Naive thymus-derived CD4-positive, alpha-beta T cell (primary cell): ENCODE measurements at regions of chr2 and their contacts with region 1.

Region 1: DNA sequence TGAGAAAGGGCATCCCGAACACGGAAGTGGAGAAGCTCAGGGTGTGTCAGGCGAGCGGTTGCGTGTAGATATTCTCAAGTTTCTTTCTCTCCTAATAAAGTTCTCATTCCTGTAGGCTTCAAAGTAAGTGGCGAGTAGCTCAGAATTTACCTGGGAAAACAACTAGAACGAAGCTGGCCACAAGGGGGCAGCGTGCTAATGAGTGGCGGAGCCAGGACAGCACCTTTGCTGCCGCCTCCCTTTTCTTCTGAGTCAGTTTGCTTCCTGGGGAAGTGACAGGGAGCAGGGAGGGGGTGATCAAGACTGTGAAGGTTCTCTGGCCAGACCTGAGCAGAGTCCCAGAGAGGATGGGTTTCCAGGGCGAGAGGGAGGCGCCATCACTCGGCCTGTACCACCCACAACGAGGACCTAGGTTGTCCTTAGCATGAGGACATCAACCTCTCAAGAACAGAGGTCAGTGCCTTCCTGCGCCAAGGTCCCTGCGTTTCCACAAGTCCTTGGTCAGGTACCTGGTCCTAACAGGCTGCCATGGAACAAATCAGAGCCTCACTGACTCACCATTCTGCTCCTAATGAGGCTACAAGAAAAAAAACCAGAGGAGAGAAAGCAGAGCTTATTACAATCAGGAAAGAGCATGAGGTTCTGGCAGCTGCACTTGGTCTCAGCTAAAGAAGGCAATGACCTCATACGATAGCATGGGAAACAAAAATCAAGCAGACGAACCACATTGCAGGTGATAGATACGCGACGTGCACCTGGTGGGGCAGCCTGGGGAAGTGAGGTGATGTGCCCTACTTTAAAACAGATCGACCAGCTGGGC is 98.6 kb downstream of the PLB1 start:
- DNase-seq: peak; percentile 72 to 86 (median 79)
- ATAC-seq: peak; percentile 93
- H3K4me3 ChIP-seq: peak overlapping the region; percentile 33
- H3K4me3 Mint-ChIP-seq: peak overlapping the region; percentile 60 to 83 (median 69)
- H3K27ac ChIP-seq: peak overlapping the region; percentile 71
- H3K27ac Mint-ChIP-seq: peak overlapping the region; percentile 76 to 98 (median 94)
- H3K4me1 ChIP-seq: peaks cover 9 to 15% of the 10 kb centered on the region in 2 donors
- H3K4me1 Mint-ChIP-seq: peaks cover 12 to 25% (median 19%) of the 10 kb centered on the region in 7 donors
- H3K27me3 ChIP-seq: no peaks in the 10 kb centered on the region
- H3K27me3 Mint-ChIP-seq: no peaks in the 10 kb centered on the region

Region 2: GRCh38 chr2:28580078-28580477 is 14.4 kb before region 1 on chr2:
- CTCF ChIA-PET with region 1: interaction called, 11 read pairs
- POLR2A ChIA-PET with region 1: no interaction called
- intact Hi-C with region 1: no loop called
- DNase-seq: no peak
- ATAC-seq: no peak
- H3K4me3 ChIP-seq: no peak overlapping the region
- H3K4me3 Mint-ChIP-seq: no peak overlapping the region
- H3K27ac ChIP-seq: no peak overlapping the region
- H3K27ac Mint-ChIP-seq: no peak overlapping the region
- H3K4me1 ChIP-seq: no peaks in the 10 kb centered on the region
- H3K4me1 Mint-ChIP-seq: peaks cover 0 to 24% (median 2%) of the 10 kb centered on the region in 7 donors
- H3K27me3 ChIP-seq: no peaks in the 10 kb centered on the region
- H3K27me3 Mint-ChIP-seq: no peaks in the 10 kb centered on the region

Region 3: GRCh38 chr2:28615706-28616105 is 21.2 kb after region 1 on chr2:
- CTCF ChIA-PET with region 1: interaction called, 54 read pairs
- POLR2A ChIA-PET with region 1: interaction called, 29 read pairs
- intact Hi-C with region 1: loop called (anchors 1 kb)
- DNase-seq: peak in 7 of 9 donors; percentile 65 to 83 (median 73)
- ATAC-seq: peak; percentile 81
- H3K4me3 ChIP-seq: no peak overlapping the region
- H3K4me3 Mint-ChIP-seq: no peak overlapping the region
- H3K27ac ChIP-seq: peak overlapping the region; percentile 81
- H3K27ac Mint-ChIP-seq: no peak overlapping the region
- H3K4me1 ChIP-seq: peaks cover 17 to 83% of the 10 kb centered on the region in 2 donors
- H3K4me1 Mint-ChIP-seq: peaks cover 16 to 58% (median 24%) of the 10 kb centered on the region in 7 donors
- H3K27me3 ChIP-seq: no peaks in the 10 kb centered on the region
- H3K27me3 Mint-ChIP-seq: no peaks in the 10 kb centered on the region

Region 4: GRCh38 chr2:28631514-28632206 is 37.2 kb after region 1 on chr2:
- CTCF ChIA-PET with region 1: interaction called, 11 read pairs
- POLR2A ChIA-PET with region 1: interaction called, 3 read pairs
- intact Hi-C with region 1: no loop called
- DNase-seq: no peak
- ATAC-seq: no peak
- H3K4me3 ChIP-seq: no peak overlapping the region
- H3K4me3 Mint-ChIP-seq: no peak overlapping the region
- H3K27ac ChIP-seq: no peak overlapping the region
- H3K27ac Mint-ChIP-seq: peak overlapping the region in 5 of 9 donors; percentile 25 to 72 (median 43)
- H3K4me1 ChIP-seq: peaks cover 0 to 7% of the 10 kb centered on the region in 2 donors
- H3K4me1 Mint-ChIP-seq: peaks cover 0 to 17% (median 15%) of the 10 kb centered on the region in 7 donors
- H3K27me3 ChIP-seq: no peaks in the 10 kb centered on the region
- H3K27me3 Mint-ChIP-seq: no peaks in the 10 kb centered on the region

Region 5: GRCh38 chr2:28780496-28780895 is 186.0 kb after region 1 on chr2:
- CTCF ChIA-PET with region 1: interaction called, 6 read pairs
- POLR2A ChIA-PET with region 1: no interaction called
- intact Hi-C with region 1: loop called in 1 of 2 experiments (anchors 1 kb)
- DNase-seq: no peak
- ATAC-seq: no peak
- H3K4me3 ChIP-seq: no peak overlapping the region
- H3K4me3 Mint-ChIP-seq: peak overlapping the region in 1 of 10 donors; percentile 22
- H3K27ac ChIP-seq: peak overlapping the region; percentile 12
- H3K27ac Mint-ChIP-seq: peak overlapping the region in 6 of 9 donors; percentile 2 to 72 (median 24)
- H3K4me1 ChIP-seq: no peaks in the 10 kb centered on the region
- H3K4me1 Mint-ChIP-seq: peaks cover 15 to 38% (median 34%) of the 10 kb centered on the region in 7 donors
- H3K27me3 ChIP-seq: no peaks in the 10 kb centered on the region
- H3K27me3 Mint-ChIP-seq: no peaks in the 10 kb centered on the region

Region 6: DNA sequence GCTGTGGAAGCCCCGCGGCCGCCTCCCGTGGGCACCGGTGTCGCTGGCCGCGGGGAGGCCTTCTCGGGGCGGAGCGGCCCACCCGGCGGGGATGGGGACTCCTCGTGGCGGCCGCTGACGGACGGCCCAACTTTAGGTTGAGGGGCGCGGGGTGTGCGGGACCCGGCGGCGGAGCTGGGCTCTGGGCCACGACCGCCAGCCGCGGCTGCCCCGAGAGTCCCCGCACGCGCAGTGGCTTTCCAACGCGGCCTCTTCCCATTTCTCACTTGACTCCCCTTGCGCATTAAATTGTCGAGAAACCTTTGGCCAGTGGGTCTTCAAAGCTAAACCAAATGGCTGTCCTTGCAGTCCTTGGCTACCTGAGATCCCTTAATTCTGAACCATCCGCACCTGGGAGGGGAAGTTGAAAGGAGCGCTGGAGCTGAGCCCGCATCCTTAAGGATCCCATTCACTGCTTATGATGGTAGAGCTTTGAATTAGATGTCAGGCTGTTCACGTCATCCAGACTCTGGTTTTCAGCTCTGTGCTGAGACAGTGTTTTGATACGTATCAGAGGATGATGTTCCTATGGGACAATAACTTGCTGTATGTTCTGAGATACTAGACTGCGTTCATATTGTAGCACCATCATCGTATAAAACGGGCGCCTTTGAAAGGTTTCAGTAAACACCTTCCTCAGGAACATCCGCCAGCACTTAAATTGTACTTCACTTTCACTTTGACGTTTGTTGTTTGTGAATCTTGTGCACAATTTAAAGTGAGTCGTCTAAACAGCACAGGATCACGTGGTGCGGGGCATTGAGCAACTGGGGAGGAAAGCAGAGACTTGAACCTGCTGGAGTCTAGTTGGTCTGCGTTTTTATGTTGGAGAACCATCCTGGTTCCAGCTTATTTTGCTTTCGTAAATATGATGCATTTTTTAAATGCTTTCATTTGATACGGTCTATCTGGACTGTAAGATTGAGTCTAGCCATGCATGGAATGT is 521.6 kb after region 1 on chr2:
- CTCF ChIA-PET with region 1: no interaction called
- POLR2A ChIA-PET with region 1: no interaction called
- intact Hi-C with region 1: loop called in 1 of 2 experiments (anchors 10 kb)
- DNase-seq: peak; percentile 39 to 82 (median 75)
- ATAC-seq: peak; percentile 62
- H3K4me3 ChIP-seq: peak overlapping the region; percentile 75
- H3K4me3 Mint-ChIP-seq: peak overlapping the region; percentile 86 to 98 (median 88)
- H3K27ac ChIP-seq: peak overlapping the region; percentile 73
- H3K27ac Mint-ChIP-seq: peak overlapping the region; percentile 87 to 99 (median 97)
- H3K4me1 ChIP-seq: peaks cover 8 to 20% of the 10 kb centered on the region in 2 donors
- H3K4me1 Mint-ChIP-seq: peaks cover 23 to 61% (median 55%) of the 10 kb centered on the region in 7 donors
- H3K27me3 ChIP-seq: no peaks in the 10 kb centered on the region
- H3K27me3 Mint-ChIP-seq: peaks cover 0 to 12% (median 0%) of the 10 kb centered on the region in 5 donors